Endothelial cell of umbilical vein (primary cell): ENCODE measurements at regions of chr1 and their contacts with region 1.

Region 1: DNA sequence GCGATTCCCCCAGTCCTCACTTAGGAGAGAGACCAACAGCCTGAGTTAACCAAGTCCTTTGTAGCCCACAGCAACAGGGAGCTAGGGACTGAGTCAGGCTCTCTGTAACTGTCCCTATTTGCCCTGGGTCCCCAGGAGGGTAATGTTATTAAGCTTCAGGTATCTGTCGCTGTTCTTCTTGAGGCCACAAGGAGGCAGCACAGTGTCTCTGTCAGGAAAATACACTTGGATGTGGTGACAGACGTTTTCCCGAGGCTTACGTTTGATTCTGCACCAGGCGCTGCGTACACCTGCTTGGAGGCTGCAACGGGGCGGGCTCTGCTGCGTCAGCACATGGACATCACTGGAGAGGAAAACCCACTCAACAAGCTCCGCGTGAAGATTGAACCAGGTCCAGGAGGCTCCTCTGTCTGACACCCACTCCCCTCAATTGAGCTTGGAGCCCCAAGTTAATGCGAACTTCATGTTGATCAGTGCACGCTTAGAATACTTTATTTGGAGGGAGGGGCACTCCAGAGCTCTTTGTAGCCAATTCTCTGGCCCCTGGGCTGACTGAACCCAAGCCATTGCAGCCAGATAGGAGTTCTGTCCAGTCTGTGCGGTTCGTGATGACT is 10.7 kb upstream of the ELF3 start:
- DNase-seq: peak; percentile 39
- H3K4me3 ChIP-seq: no peak overlapping the region
- H3K27ac ChIP-seq: no peak overlapping the region
- H3K4me1 ChIP-seq: no peaks in the 10 kb centered on the region
- H3K27me3 ChIP-seq: no peaks in the 10 kb centered on the region
- CTCF ChIP-seq: peak; percentile 74 to 81
- POLR2A ChIP-seq: no peak

Region 2: DNA sequence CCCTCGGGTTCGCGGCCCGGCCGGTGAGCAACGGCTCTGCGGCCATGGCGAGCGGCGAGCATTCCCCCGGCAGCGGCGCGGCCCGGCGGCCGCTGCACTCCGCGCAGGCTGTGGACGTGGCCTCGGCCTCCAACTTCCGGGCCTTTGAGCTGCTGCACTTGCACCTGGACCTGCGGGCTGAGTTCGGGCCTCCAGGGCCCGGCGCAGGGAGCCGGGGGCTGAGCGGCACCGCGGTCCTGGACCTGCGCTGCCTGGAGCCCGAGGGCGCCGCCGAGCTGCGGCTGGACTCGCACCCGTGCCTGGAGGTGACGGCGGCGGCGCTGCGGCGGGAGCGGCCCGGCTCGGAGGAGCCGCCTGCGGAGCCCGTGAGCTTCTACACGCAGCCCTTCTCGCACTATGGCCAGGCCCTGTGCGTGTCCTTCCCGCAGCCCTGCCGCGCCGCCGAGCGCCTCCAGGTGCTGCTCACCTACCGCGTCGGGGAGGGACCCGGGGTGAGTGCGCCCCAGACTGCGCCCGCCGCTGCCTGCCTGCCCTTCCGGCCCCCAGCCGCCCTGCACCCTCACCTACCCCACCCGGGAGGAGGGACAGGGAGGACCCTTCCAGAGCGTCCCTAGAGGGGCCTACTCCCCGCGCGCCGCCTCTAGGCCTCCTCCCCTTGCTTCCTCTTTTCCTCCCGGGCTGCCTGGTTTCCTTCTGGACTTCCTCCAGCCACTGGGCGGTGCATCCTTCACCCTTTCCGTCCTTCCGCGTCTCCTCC is 16.9 kb before region 1 on chr1 and contains the start of gene RNPEP:
- CTCF ChIA-PET with region 1: interaction called, 21 read pairs
- POLR2A ChIA-PET with region 1: interaction called, 3 read pairs
- dilution Hi-C with region 1: no loop called
- intact Hi-C with region 1: no loop called
- DNase-seq: peak; percentile 57
- H3K4me3 ChIP-seq: peak within 1 kb of the TSS; percentile 48 to 98 (median 75)
- H3K27ac ChIP-seq: peak within 1 kb of the TSS; percentile 18
- H3K4me1 ChIP-seq: peaks cover 8% of the 10 kb centered on the region
- H3K27me3 ChIP-seq: no peaks in the 10 kb centered on the region
- CTCF ChIP-seq: no peak
- POLR2A ChIP-seq: peak; percentile 90
- total RNA-seq, gene RNPEP: 65.7 and 73.5 TPM in 2 replicates

Region 3: DNA sequence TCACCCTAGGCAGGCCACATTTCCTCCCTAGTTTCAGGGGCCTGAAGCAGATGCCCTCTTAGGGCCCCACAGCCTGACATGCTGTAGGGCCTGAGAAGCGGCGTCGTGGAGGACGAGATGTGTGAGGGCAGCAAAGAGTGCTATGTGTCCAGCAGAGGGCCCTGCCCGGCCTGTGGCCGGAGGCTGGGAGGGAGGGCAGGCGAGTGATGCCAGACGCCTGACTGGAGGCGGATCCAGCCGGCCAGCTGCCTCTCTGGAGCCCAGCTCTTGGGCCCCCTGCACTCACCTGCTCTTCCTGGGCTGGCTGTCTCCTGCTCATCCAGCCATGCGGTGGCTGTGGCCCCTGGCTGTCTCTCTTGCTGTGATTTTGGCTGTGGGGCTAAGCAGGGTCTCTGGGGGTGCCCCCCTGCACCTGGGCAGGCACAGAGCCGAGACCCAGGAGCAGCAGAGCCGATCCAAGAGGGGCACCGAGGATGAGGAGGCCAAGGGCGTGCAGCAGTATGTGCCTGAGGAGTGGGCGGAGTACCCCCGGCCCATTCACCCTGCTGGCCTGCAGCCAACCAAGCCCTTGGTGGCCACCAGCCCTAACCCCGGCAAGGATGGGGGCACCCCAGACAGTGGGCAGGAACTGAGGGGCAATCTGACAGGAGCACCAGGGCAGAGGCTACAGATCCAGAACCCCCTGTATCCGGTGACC is 123.1 kb after region 1 on chr1 and contains the start of gene GPR37L1:
- CTCF ChIA-PET with region 1: interaction called, 102 read pairs
- POLR2A ChIA-PET with region 1: no interaction called
- dilution Hi-C with region 1: no loop called
- intact Hi-C with region 1: loop called (anchors 1 kb)
- DNase-seq: peak; percentile 49
- H3K4me3 ChIP-seq: no peak within 1 kb of the TSS
- H3K27ac ChIP-seq: no peak within 1 kb of the TSS
- H3K4me1 ChIP-seq: no peaks in the 10 kb centered on the region
- H3K27me3 ChIP-seq: peaks cover 4 to 10% of the 10 kb centered on the region in 2 experiments
- CTCF ChIP-seq: peak; percentile 53 to 80
- POLR2A ChIP-seq: no peak
- total RNA-seq, gene GPR37L1: not detected in 2 replicates

Region 4: GRCh38 chr1:202416641-202417040 is 416.9 kb after region 1 on chr1:
- CTCF ChIA-PET with region 1: no interaction called
- POLR2A ChIA-PET with region 1: no interaction called
- dilution Hi-C with region 1: no loop called
- intact Hi-C with region 1: no loop called
- DNase-seq: no peak
- H3K4me3 ChIP-seq: no peak overlapping the region
- H3K27ac ChIP-seq: no peak overlapping the region
- H3K4me1 ChIP-seq: no peaks in the 10 kb centered on the region
- H3K27me3 ChIP-seq: no peaks in the 10 kb centered on the region
- CTCF ChIP-seq: no peak
- POLR2A ChIP-seq: no peak